ENCODE measurements at regions of chr19 and their contacts with region 1.

Region 1: GRCh38 chr19:35748106-35749020 is at the start of gene LIN37:
- DNase-seq: peak; percentile 93
- CTCF ChIP-seq: no peak

Region 2: GRCh38 chr19:35710784-35711723 is 37.3 kb before region 1 on chr19:
- CTCF ChIA-PET with region 1: interaction called, 5 read pairs
- POLR2A ChIA-PET with region 1: interaction called, 13 read pairs
- DNase-seq: peak; percentile 68
- CTCF ChIP-seq: no peak

Region 3: GRCh38 chr19:35727053-35727947 is 21.1 kb before region 1 on chr19:
- CTCF ChIA-PET with region 1: interaction called, 4 read pairs
- POLR2A ChIA-PET with region 1: interaction called, 15 read pairs
- DNase-seq: no peak
- CTCF ChIP-seq: no peak